Natural killer cell (primary cell): ENCODE measurements at regions of chr20 and their contacts with region 1.

Region 1: DNA sequence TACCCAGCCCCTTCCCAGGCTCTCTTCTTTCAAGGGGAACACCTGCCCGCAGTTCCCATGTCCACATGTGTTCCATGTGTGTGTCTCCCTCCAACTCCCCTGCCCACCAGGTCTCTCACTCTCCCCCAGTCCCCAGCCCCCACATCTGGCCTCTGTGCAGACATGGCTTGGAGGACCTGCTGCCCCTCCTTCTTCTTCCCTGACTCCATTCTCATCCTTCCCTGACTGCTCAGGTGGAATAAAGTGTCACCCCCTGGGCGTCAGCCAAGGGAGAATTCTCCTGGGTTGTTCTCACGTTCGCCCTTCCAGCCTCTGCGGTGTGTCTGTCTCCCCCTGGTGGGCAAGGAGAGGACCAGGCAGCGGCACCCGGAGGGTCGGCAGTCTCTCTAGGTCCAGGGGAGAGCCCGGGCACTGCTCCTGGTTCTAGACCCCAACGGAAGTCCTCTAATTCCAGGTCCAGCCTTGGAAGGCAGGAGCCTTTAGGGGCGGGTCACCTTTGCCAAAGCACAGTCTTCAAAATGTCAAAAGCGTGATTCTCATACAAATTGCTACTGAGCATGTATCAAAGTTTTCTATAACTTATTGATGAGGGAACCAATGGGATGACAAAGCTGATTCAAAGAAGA is 50.5 kb downstream of the EBF4 start:
- DNase-seq: peak; percentile 63 to 91
- ATAC-seq: peak; percentile 64 to 69 (median 67)
- H3K4me3 ChIP-seq: no peak overlapping the region
- H3K4me3 Mint-ChIP-seq: peak overlapping the region; percentile 90
- H3K27ac ChIP-seq: peak overlapping the region; percentile 37
- H3K27ac Mint-ChIP-seq: peak overlapping the region; percentile 91 to 95
- H3K4me1 ChIP-seq: peaks cover 62% of the 10 kb centered on the region
- H3K4me1 Mint-ChIP-seq: peaks cover 56 to 63% of the 10 kb centered on the region in 2 donors
- H3K27me3 ChIP-seq: no peaks in the 10 kb centered on the region
- H3K27me3 Mint-ChIP-seq: no peaks in the 10 kb centered on the region
- CTCF ChIP-seq: peak; percentile 85

Region 2: GRCh38 chr20:2713285-2713684 is 29.8 kb before region 1 on chr20:
- intact Hi-C with region 1: loop called (anchors 1 kb)
- DNase-seq: peak in 1 of 2 donors; percentile 74
- ATAC-seq: peak in 1 of 3 donors; percentile 79
- H3K4me3 ChIP-seq: no peak overlapping the region
- H3K4me3 Mint-ChIP-seq: no peak overlapping the region
- H3K27ac ChIP-seq: no peak overlapping the region
- H3K27ac Mint-ChIP-seq: no peak overlapping the region
- H3K4me1 ChIP-seq: peaks cover 3% of the 10 kb centered on the region
- H3K4me1 Mint-ChIP-seq: peaks cover 8 to 10% of the 10 kb centered on the region in 2 donors
- H3K27me3 ChIP-seq: no peaks in the 10 kb centered on the region
- H3K27me3 Mint-ChIP-seq: no peaks in the 10 kb centered on the region
- CTCF ChIP-seq: peak; percentile 28

Region 3: DNA sequence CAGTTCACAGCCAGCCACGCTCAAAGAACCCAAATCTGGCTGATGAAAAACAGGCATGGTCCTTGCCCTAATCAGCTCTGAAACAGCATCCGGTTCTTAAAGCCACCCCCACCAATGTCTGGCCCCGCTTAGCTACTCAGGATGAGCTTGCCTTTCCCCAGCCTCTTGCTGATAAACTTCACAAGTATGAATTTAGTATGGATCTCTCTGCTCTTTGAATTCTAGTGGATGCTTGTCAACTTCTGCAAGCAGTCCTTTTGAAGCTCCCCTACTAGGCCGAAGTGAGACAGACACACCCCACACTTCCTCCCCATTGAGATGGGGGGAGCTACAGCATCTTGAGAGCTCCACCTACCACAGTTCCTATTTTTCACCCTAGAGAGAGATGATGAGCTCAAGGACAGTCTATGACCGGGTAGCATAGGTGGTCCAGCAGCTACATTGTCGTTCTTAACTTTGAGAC is 13.8 kb before region 1 on chr20:
- intact Hi-C with region 1: loop called (anchors 1 kb)
- DNase-seq: peak in 1 of 2 donors; percentile 74
- ATAC-seq: peak; percentile 91 to 92 (median 91)
- H3K4me3 ChIP-seq: no peak overlapping the region
- H3K4me3 Mint-ChIP-seq: peak overlapping the region; percentile 41
- H3K27ac ChIP-seq: peak overlapping the region; percentile 71
- H3K27ac Mint-ChIP-seq: peak overlapping the region; percentile 88
- H3K4me1 ChIP-seq: peaks cover 22% of the 10 kb centered on the region
- H3K4me1 Mint-ChIP-seq: peaks cover 15 to 29% of the 10 kb centered on the region in 2 donors
- H3K27me3 ChIP-seq: no peaks in the 10 kb centered on the region
- H3K27me3 Mint-ChIP-seq: no peaks in the 10 kb centered on the region
- CTCF ChIP-seq: no peak

Region 4: DNA sequence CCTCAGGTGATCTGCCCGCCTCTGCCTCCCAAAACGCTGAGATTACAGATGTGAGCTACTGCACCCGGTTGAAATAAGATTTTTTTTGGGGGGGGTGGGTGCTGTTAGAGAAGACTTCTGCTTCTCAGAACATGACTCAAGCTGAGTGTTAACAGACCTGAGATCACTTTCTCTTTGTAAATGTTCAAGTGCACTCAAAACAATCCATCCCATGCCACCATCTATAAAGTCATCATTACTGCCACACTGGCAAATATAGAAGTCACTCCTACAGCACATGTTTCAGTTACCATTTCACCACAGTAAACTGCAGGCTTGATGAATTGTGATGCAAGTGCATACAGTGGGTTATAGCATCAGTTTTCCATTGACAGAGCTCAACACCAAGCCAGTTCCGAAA is 106.5 kb after region 1 on chr20:
- intact Hi-C with region 1: loop called (anchors 5 kb)
- DNase-seq: no peak
- ATAC-seq: no peak
- H3K4me3 ChIP-seq: no peak overlapping the region
- H3K4me3 Mint-ChIP-seq: no peak overlapping the region
- H3K27ac ChIP-seq: no peak overlapping the region
- H3K27ac Mint-ChIP-seq: peak overlapping the region in 1 of 2 donors; percentile 90
- H3K4me1 ChIP-seq: peaks cover 23% of the 10 kb centered on the region
- H3K4me1 Mint-ChIP-seq: peaks cover 25 to 50% of the 10 kb centered on the region in 2 donors
- H3K27me3 ChIP-seq: no peaks in the 10 kb centered on the region
- H3K27me3 Mint-ChIP-seq: no peaks in the 10 kb centered on the region
- CTCF ChIP-seq: no peak

Region 5: DNA sequence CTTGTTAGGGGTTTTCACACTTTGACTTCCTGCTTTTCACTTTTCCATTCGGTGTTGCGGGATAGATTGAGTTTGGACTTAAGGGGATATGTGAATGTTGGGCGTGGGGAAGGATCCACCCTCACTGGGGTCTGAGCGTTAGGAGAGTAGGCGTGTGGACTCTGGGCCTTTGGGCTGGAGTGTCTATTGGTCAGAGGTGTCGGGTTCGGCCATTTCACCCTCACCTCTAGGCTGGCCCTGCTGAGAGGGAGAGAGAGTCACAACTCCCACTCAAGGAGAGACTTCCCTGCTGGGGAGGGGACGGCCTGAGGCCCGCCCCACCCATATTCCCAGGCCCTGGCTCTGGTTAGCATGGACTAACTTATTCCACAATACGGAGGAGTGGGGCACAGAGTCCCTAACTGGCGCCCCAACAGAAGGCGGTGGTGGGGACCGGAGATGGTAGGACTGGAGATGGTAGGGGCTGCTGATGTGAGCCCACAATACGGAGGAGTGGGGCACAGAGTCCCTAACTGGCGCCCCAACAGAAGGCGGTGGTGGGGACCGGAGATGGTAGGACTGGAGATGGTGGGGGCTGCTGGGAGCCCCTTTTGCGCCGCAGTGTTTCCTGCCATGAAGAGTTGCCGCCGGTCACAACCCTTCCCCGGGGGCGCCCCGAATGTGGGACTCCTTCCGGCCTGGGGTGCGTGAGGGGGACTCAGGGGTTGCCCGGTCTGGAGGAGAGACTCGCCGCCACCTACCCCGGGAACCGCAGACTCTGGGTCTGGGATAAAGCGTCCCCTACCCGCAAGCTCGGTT is 128.8 kb after region 1 on chr20:
- intact Hi-C with region 1: no loop called
- DNase-seq: peak in 1 of 2 donors; percentile 20
- ATAC-seq: peak in 2 of 3 donors; percentile 7 to 11
- H3K4me3 ChIP-seq: peak overlapping the region; percentile 67
- H3K4me3 Mint-ChIP-seq: peak overlapping the region; percentile 91
- H3K27ac ChIP-seq: peak overlapping the region; percentile 58
- H3K27ac Mint-ChIP-seq: peak overlapping the region; percentile 74 to 85
- H3K4me1 ChIP-seq: peaks cover 62% of the 10 kb centered on the region
- H3K4me1 Mint-ChIP-seq: peaks cover 70 to 74% of the 10 kb centered on the region in 2 donors
- H3K27me3 ChIP-seq: no peaks in the 10 kb centered on the region
- H3K27me3 Mint-ChIP-seq: no peaks in the 10 kb centered on the region
- CTCF ChIP-seq: no peak